Prostate gland (tissue), 2 donors: ENCODE measurements at regions of chr12 and their contacts with region 1.

Region 1: DNA sequence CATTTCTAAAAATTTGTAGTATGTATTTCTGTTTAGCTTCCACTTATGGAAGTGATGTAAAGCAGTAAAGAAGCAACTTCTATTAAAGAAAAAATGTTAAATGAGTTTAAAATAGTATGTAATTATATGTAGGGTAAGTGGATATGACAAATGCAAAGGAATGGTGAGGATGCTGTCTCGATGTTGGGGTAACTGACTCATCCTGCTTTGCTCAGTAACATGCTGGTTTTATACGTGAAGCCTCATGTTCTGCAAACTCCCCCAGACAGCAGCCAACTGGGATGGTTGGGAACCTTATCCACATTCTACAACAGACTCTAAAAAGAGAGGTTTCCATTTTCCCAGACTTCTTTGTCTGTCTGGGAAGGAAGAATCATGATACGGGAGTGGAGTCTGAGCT is 1006.4 kb upstream of the TMEM132C start:
- DNase-seq: no peak
- H3K4me3 ChIP-seq: no peak overlapping the region
- H3K27ac ChIP-seq: no peak overlapping the region
- H3K4me1 ChIP-seq: no peaks in the 10 kb centered on the region
- H3K27me3 ChIP-seq: no peaks in the 10 kb centered on the region
- CTCF ChIP-seq: no peak
- POLR2A ChIP-seq: no peak

Region 2: DNA sequence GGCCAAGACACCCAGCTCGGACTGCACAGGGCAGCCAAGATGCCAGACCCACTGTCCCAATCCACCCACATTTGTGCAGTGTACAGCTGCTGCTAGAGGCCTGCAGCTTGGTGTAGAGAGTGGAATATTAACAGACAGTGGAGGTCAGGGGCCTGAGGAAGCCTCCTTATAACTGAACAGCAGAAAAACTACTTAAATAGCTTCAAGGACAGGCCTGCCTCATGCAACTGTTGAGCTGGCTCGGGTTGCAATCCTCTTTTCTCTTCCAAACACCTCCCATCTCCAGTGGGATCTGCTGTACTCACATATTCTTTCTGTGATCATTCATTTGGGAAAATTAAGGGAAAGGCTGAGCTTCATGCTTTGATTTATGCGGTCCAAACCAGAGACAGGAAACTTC is 36.8 kb before region 1 on chr12:
- intact Hi-C with region 1: loop called (anchors 2 kb)
- DNase-seq: no peak
- H3K4me3 ChIP-seq: no peak overlapping the region
- H3K27ac ChIP-seq: no peak overlapping the region
- H3K4me1 ChIP-seq: no peaks in the 10 kb centered on the region
- H3K27me3 ChIP-seq: no peaks in the 10 kb centered on the region
- CTCF ChIP-seq: no peak
- POLR2A ChIP-seq: no peak